Ovary (tissue), 10 donors: ENCODE measurements at regions of chr5 and their contacts with region 1.

Region 1: DNA sequence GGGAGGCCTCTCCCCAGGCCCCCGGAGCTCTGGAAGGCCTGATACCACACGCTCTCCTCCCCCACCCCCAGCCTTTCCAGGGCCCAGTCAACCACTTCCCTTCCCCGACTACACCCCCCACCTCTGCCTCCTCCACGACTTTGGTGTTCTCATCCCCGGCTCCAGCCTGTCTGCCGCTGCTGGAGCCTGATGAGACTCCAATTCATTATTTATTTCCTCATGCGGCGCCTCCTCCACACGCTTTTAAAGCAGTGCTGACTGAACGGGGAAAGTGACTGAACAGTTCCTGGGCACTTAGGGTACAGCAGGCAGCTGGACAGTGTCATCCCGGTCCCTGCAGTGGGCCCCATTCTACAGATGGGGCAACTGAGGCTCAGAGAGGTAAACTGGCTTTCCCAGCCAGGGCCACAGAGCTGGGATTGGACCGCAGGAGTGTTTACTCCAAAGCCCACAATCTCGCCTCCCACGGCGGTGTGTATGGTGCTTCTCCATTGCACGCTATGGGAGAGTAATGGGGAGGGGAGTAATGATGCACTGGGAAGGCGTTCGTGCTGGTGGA is 15.9 kb upstream of the RPL26L1 start:
- DNase-seq: peak; percentile 32 to 62 (median 51)
- H3K4me3 ChIP-seq: no peak overlapping the region
- H3K27ac ChIP-seq: no peak overlapping the region
- H3K4me1 ChIP-seq: no peaks in the 10 kb centered on the region
- H3K27me3 ChIP-seq: no peaks in the 10 kb centered on the region
- CTCF ChIP-seq: no peak
- EP300 ChIP-seq: no peak
- POLR2A ChIP-seq: no peak

Region 2: GRCh38 chr5:172463031-172463430 is 480.3 kb before region 1 on chr5:
- intact Hi-C with region 1: loop called in 1 of 4 experiments (anchors 10 kb)
- DNase-seq: no peak
- H3K4me3 ChIP-seq: no peak overlapping the region
- H3K27ac ChIP-seq: no peak overlapping the region
- H3K4me1 ChIP-seq: no peaks in the 10 kb centered on the region
- H3K27me3 ChIP-seq: no peaks in the 10 kb centered on the region
- CTCF ChIP-seq: no peak
- EP300 ChIP-seq: no peak
- POLR2A ChIP-seq: no peak

Region 3: GRCh38 chr5:172666251-172666650 is 277.1 kb before region 1 on chr5:
- intact Hi-C with region 1: no loop called
- DNase-seq: peak in 1 of 5 donors; percentile 34
- H3K4me3 ChIP-seq: no peak overlapping the region
- H3K27ac ChIP-seq: no peak overlapping the region
- H3K4me1 ChIP-seq: peaks cover 14% of the 10 kb centered on the region
- H3K27me3 ChIP-seq: no peaks in the 10 kb centered on the region
- CTCF ChIP-seq: no peak
- EP300 ChIP-seq: no peak
- POLR2A ChIP-seq: no peak